CD4-positive, alpha-beta T cell (primary cell): ENCODE measurements at regions of chr7 and their contacts with region 1.

Region 1: GRCh38 chr7:24595671-24596418 is 22.6 kb downstream of the PALS2 start:
- DNase-seq: peak in 1 of 14 experiments; percentile 18
- ATAC-seq: peak; percentile 44
- H3K4me3 ChIP-seq: peak overlapping the region; percentile 41
- H3K4me3 Mint-ChIP-seq: no peak overlapping the region
- H3K27ac ChIP-seq: no peak overlapping the region
- H3K27ac Mint-ChIP-seq: no peak overlapping the region
- H3K4me1 ChIP-seq: no peaks in the 10 kb centered on the region
- H3K4me1 Mint-ChIP-seq: no peaks in the 10 kb centered on the region
- H3K27me3 ChIP-seq: no peaks in the 10 kb centered on the region
- H3K27me3 Mint-ChIP-seq: no peaks in the 10 kb centered on the region
- CTCF ChIP-seq: no peak

Region 2: DNA sequence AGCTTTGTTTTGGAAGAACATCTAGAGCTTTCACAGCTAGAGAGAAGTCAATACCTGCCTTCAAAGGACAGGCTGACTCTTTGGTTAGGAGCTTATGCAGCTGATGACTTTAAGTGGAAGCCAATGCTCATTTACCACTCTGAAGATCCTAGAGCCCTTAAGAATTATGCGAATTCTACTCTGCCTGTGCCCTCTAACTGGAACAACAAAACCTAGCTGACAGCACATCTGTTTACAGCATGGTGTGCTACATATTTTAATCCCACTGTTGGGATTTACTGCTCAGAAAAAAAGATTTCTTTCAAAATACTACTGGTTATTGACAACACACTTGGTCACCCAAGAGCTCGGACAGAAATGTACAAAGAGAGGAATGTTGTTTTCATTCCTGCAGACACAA is 34.8 kb after region 1 on chr7:
- CTCF ChIA-PET with region 1: no interaction called
- POLR2A ChIA-PET with region 1: no interaction called
- intact Hi-C with region 1: loop called in 1 of 2 experiments (anchors 2 kb)
- DNase-seq: no peak
- ATAC-seq: no peak
- H3K4me3 ChIP-seq: no peak overlapping the region
- H3K4me3 Mint-ChIP-seq: no peak overlapping the region
- H3K27ac ChIP-seq: no peak overlapping the region
- H3K27ac Mint-ChIP-seq: no peak overlapping the region
- H3K4me1 ChIP-seq: no peaks in the 10 kb centered on the region
- H3K4me1 Mint-ChIP-seq: peaks cover 12% of the 10 kb centered on the region
- H3K27me3 ChIP-seq: no peaks in the 10 kb centered on the region
- H3K27me3 Mint-ChIP-seq: no peaks in the 10 kb centered on the region
- CTCF ChIP-seq: no peak